Aorta (tissue), 5 donors: ENCODE measurements at regions of chr12 and their contacts with region 1.

Region 1: DNA sequence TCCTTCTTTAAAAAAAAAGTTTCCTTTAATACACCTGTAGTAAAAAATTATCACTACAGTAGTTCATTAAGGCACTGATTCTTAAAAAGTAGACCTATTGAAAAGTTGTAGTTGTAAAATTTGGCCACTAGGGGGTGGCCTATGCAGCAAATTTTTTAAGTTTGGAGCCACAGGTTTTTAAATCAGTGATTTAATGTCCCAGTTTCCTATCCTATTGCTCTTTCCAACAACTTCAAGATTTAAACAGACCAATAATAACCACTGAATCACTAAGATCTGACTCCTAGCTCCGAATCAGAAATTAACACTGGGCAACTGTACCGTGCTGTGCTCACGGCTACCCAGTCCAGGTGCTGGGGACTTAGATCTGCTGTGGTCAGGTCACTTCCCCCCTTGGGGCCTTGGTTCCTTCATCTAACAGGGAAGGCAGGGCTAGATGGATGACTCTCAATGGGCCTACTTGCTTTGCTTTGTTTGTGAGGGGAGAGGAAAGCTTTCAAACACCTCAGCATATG is 279.3 kb downstream of the MED13L start:
- DNase-seq: no peak
- ATAC-seq: peak; percentile 75
- H3K4me3 ChIP-seq: no peak overlapping the region
- H3K27ac ChIP-seq: peak overlapping the region in 1 of 2 donors; percentile 59
- H3K4me1 ChIP-seq: peaks cover 0 to 2% of the 10 kb centered on the region in 2 donors
- H3K27me3 ChIP-seq: no peaks in the 10 kb centered on the region

Region 2: DNA sequence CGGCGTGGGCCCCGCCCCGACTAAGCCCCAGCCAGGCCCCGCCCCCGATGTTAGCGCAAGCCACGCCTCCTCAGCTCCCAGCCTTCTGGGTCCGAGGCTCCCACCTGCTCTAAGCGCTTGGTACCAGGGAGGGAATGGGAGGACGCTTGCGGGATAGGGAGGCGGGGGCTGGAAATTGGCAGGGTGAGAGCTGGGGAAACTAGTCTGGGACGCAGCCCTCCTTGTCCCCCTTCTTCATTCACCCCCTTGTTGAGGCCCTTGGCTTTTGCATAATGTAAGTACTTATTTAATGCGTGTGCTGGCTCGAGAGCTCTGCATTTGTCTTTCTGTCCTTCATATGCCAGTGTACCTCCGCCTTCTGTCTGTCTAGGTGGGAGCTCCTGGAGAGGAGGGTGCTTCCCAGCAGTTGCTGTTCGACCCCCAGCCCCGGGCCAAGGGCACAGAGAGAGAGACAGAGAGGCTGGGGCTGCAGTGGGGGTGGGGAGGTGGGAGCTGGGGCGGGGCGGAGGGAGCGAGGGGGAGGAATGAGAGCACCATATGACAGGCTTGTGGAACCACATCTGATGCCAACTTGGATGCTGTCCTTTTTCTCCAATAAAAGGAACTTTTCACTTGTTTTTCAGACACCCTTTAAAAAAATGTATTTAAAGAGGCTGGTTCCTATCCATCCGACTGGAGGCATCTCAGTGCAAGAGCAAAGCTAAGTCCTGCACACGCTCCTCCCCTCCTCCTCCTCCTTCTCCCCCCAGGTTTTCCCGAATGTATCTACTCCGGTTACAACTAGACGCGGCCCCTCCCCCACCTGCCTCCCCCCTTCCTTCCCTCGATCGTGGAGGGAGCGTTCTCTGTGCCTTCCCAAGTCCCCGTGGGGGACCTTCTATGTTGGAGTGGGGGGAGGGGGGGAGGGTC is 535.4 kb after region 1 on chr12:
- intact Hi-C with region 1: loop called in 1 of 2 experiments (anchors 5 kb)
- DNase-seq: peak; percentile 84 to 93
- ATAC-seq: peak; percentile 85
- H3K4me3 ChIP-seq: peak overlapping the region; percentile 38 to 90
- H3K27ac ChIP-seq: peak overlapping the region in 1 of 2 donors; percentile 37
- H3K4me1 ChIP-seq: peaks cover 1 to 5% of the 10 kb centered on the region in 2 donors
- H3K27me3 ChIP-seq: no peaks in the 10 kb centered on the region

Region 3: DNA sequence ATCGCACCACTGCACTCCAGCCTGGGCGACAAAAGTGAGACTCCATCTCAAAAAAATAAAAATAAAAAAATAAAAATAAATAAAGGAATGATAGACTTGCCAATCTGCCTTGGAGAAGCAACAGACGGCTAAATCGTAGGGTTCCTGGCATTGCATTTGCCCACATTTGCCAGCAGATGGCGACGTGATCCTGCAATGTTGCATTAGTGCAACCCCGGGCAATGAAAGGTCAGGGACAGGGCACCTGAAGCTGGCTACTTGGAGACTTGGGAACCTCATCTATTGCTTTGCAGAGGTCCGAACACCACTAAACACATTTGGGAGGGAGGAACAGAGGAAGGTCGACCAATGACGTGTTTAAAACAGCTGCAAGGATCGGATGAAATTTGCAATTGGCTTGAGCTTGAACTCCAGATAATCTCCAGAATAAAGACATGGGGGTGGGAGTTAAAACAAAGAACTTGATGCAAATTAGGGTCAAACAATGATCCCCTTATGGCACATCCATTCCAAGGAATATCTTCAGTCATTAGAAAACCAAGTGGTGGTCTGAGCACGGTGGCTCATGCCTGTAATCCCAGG is 705.1 kb after region 1 on chr12:
- intact Hi-C with region 1: loop called (anchors 5 to 10 kb)
- DNase-seq: peak; percentile 70 to 84
- ATAC-seq: no peak
- H3K4me3 ChIP-seq: no peak overlapping the region
- H3K27ac ChIP-seq: no peak overlapping the region
- H3K4me1 ChIP-seq: no peaks in the 10 kb centered on the region
- H3K27me3 ChIP-seq: no peaks in the 10 kb centered on the region

Region 4: DNA sequence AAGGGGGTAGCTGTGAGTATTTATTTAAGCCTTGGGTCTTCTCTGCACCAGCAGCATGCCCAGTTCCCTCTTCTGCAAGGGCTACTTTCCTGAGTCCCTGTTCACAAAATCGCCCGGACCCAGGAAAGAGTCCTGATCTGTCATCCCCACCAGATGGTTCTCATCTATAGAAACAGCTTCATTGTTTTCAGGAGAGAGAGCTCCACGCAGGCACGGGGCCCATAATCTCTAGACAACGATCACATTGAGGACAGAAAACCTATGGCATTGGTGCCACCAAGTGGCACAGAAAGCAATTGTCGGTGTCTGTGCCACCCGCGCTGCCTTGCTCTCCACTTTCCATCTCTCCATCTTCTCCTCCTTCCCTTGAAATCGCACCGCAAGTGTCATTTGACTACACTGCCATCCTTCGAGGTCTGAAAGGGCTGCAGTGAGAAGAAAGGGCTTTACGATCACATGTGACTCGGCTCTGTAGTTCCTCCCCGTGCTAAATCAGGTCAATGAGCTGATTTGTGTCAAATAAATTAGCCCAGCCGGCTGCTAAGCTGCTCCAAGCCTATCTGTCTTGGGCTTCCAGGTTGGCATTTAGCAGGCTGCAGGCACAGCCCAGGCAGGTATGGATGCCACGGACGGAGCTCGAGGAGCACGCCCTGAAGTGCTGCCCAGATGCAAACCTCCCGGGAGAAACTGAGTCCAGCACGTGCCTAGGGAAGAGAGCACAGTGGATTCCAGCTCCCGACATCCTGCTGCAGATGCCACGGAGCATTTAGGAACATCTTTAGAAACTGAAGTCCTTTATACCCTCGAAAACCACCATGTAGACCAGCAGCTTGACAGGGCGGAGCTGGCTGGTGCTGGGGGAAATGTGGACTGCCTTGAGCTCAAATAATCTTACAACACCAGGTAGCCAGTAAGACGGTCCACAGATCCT is 710.9 kb after region 1 on chr12:
- intact Hi-C with region 1: loop called (anchors 5 to 10 kb)
- DNase-seq: peak in 1 of 2 donors; percentile 67
- ATAC-seq: peak; percentile 81
- H3K4me3 ChIP-seq: no peak overlapping the region
- H3K27ac ChIP-seq: no peak overlapping the region
- H3K4me1 ChIP-seq: no peaks in the 10 kb centered on the region
- H3K27me3 ChIP-seq: no peaks in the 10 kb centered on the region